ENCODE measurements at regions of chr22 and their contacts with region 1.

Region 1: DNA sequence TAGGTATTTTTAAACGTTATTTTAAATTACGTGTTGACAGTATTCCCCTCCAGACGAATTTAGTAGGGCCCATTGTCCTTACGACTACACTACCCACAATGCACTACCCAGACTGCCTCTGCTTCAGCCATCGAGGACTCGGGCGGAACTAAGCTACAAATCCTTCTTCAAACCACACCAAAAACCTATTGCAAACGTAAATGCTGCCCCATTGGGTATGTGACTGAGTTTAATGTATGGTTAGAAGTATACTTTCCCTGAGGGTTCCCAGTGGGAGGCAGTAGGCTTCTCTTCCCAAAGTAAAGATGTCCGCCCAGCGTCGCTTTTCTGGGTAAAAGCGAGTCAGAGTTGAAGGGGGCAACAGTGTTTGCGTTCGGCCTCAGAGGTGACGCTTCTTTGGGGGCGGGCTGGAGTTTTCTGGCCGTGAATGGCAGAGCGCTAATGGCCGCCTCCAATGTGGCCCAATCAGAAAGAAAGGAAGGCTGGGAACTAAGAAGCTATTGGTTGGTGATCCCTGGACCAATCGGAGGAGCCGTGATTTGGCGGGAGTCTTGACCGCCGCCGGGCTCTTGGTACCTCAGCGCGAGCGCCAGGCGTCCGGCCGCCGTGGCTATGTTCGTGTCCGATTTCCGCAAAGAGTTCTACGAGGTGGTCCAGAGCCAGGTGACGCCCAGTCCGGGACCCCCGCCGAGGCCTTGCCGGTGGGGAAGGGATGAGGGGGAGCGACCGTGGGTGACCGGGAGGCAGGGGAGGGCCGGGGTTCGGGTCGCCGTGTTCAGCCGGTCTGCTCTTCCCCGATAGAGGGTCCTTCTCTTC is at the start of gene CDC45:
- DNase-seq: peak; percentile 95 to 97 (median 95)
- H3K4me3 ChIP-seq: peak within 1 kb of the TSS; percentile 62 to 83
- H3K4me3 Mint-ChIP-seq: peak within 1 kb of the TSS; percentile 91 to 98 (median 94)
- H3K27ac ChIP-seq: peak within 1 kb of the TSS; percentile 96
- H3K27ac Mint-ChIP-seq: peak within 1 kb of the TSS; percentile 97 to 100 (median 100)
- H3K4me1 ChIP-seq: peaks cover 18% of the 10 kb centered on the region
- H3K4me1 Mint-ChIP-seq: peaks cover 21 to 46% (median 34%) of the 10 kb centered on the region in 4 donors
- H3K27me3 ChIP-seq: no peaks in the 10 kb centered on the region
- H3K27me3 Mint-ChIP-seq: no peaks in the 10 kb centered on the region
- total RNA-seq, gene CDC45: 0.53 to 0.64 TPM

Region 2: GRCh38 chr22:19109198-19110067 is 370.1 kb before region 1 on chr22:
- CTCF ChIA-PET with region 1: interaction called, 4 read pairs
- POLR2A ChIA-PET with region 1: interaction called, 4 read pairs
- intact Hi-C with region 1: loop called (anchors 1 kb)
- DNase-seq: peak; percentile 75 to 86 (median 82)
- H3K4me3 ChIP-seq: peak overlapping the region; percentile 26 to 29
- H3K4me3 Mint-ChIP-seq: peak overlapping the region; percentile 77 to 89 (median 84)
- H3K27ac ChIP-seq: peak overlapping the region; percentile 80
- H3K27ac Mint-ChIP-seq: peak overlapping the region; percentile 79 to 99 (median 97)
- H3K4me1 ChIP-seq: peaks cover 66% of the 10 kb centered on the region
- H3K4me1 Mint-ChIP-seq: peaks cover 51 to 76% (median 62%) of the 10 kb centered on the region in 4 donors
- H3K27me3 ChIP-seq: no peaks in the 10 kb centered on the region
- H3K27me3 Mint-ChIP-seq: no peaks in the 10 kb centered on the region

Region 3: GRCh38 chr22:19143967-19144400 is 335.6 kb before region 1 on chr22:
- CTCF ChIA-PET with region 1: interaction called, 10 read pairs
- POLR2A ChIA-PET with region 1: interaction called, 9 read pairs
- intact Hi-C with region 1: loop called (anchors 1 kb)
- DNase-seq: peak; percentile 22 to 59 (median 44)
- H3K4me3 ChIP-seq: peak overlapping the region; percentile 86 to 94
- H3K4me3 Mint-ChIP-seq: peak overlapping the region; percentile 96 to 100 (median 98)
- H3K27ac ChIP-seq: peak overlapping the region; percentile 81
- H3K27ac Mint-ChIP-seq: peak overlapping the region; percentile 90 to 99 (median 98)
- H3K4me1 ChIP-seq: peaks cover 12% of the 10 kb centered on the region
- H3K4me1 Mint-ChIP-seq: peaks cover 11 to 25% (median 18%) of the 10 kb centered on the region in 4 donors
- H3K27me3 ChIP-seq: peaks cover 7% of the 10 kb centered on the region
- H3K27me3 Mint-ChIP-seq: peaks cover 2 to 6% of the 10 kb centered on the region in 2 donors

Region 4: GRCh38 chr22:19419464-19420178 is 59.9 kb before region 1 on chr22:
- CTCF ChIA-PET with region 1: no interaction called
- POLR2A ChIA-PET with region 1: interaction called, 17 read pairs
- intact Hi-C with region 1: no loop called
- DNase-seq: peak; percentile 56 to 74 (median 63)
- H3K4me3 ChIP-seq: no peak overlapping the region
- H3K4me3 Mint-ChIP-seq: peak overlapping the region; percentile 34 to 74 (median 58)
- H3K27ac ChIP-seq: peak overlapping the region; percentile 60
- H3K27ac Mint-ChIP-seq: peak overlapping the region; percentile 76 to 94 (median 92)
- H3K4me1 ChIP-seq: peaks cover 59% of the 10 kb centered on the region
- H3K4me1 Mint-ChIP-seq: peaks cover 53 to 78% (median 64%) of the 10 kb centered on the region in 4 donors
- H3K27me3 ChIP-seq: no peaks in the 10 kb centered on the region
- H3K27me3 Mint-ChIP-seq: no peaks in the 10 kb centered on the region

Region 5: DNA sequence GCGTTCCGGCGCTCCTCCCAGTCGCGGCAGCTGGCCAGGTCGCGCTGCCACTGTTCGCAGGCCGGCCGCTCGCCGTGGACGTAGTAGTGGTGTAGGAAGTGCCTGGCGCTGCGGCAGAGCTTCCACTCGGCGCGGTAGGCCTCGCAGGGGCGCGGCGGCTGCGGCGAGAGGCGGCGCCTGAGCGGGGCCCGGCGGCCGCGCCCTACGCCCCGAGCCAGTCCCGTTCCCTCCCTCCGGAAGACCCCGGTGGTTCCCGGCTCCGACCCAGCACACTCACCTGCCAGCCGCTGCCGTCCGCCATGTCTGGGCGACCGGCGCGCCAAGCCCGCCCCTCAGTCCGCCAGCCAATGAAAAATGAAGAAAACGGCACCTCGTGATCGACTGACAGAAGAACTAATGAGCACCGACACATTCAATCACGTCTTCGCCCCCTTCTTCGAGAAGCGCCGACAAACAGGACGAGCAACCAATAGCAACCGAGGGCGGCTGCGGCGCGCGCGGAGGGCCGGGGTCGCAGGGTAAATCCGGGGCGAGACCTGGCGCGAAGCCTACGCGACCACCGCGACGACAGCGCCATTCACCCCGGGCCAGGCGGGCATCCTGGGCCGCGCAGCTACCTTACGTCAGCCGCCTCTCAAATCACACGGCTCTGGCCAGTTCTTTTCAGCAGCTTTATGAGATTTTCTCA is 32.0 kb before region 1 on chr22 and contains the start of gene C22orf39:
- CTCF ChIA-PET with region 1: no interaction called
- POLR2A ChIA-PET with region 1: interaction called, 33 read pairs
- intact Hi-C with region 1: loop called (anchors 1 kb)
- DNase-seq: peak; percentile 91 to 96 (median 91)
- H3K4me3 ChIP-seq: peak within 1 kb of the TSS; percentile 63 to 65
- H3K4me3 Mint-ChIP-seq: peak within 1 kb of the TSS; percentile 91 to 98 (median 95)
- H3K27ac ChIP-seq: peak within 1 kb of the TSS; percentile 91
- H3K27ac Mint-ChIP-seq: peak within 1 kb of the TSS; percentile 82 to 99 (median 99)
- H3K4me1 ChIP-seq: peaks cover 37% of the 10 kb centered on the region
- H3K4me1 Mint-ChIP-seq: peaks cover 29 to 59% (median 44%) of the 10 kb centered on the region in 4 donors
- H3K27me3 ChIP-seq: no peaks in the 10 kb centered on the region
- H3K27me3 Mint-ChIP-seq: no peaks in the 10 kb centered on the region
- total RNA-seq, gene C22orf39: 40.5 TPM

Region 6: DNA sequence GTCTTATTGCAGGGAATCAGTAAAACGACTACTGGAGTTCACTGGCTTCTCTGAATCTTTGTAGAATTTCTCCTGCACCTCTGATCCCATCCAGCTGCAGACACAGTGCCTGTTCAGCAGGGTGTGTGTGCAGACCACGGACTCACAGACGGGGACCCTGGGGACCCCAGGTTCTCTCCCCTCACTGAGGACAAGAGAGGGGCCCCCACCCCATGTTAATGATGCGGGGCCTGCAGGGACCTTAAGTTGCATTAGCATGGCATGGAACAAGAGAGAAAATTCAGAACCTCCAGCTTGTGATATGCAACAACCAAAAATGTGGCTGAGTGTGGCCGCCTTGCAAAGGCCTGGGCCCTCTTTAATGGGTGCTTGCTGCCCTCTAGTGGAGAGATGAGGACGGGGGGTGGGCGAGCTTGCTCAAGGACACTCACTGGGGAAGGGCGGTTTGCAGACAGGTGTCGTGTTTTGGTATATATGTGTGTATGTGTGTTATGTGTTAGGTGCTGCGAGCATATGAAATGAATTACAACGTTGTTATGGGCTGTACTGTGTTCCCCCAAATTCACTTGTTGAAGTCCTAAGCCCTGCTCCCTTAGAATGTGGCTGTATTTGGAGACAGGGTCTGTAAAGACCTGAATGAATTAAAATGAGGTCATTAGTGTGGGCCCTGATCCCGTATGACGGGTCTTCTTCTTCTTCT is 150.3 kb after region 1 on chr22:
- CTCF ChIA-PET with region 1: interaction called, 19 read pairs
- POLR2A ChIA-PET with region 1: interaction called, 4 read pairs
- intact Hi-C with region 1: loop called (anchors 1 kb)
- DNase-seq: peak; percentile 80 to 84 (median 81)
- H3K4me3 ChIP-seq: no peak overlapping the region
- H3K4me3 Mint-ChIP-seq: no peak overlapping the region
- H3K27ac ChIP-seq: no peak overlapping the region
- H3K27ac Mint-ChIP-seq: peak overlapping the region in 2 of 7 donors; percentile 29 to 67
- H3K4me1 ChIP-seq: no peaks in the 10 kb centered on the region
- H3K4me1 Mint-ChIP-seq: peaks cover 0 to 3% (median 1%) of the 10 kb centered on the region in 4 donors
- H3K27me3 ChIP-seq: no peaks in the 10 kb centered on the region
- H3K27me3 Mint-ChIP-seq: peaks cover 2% of the 10 kb centered on the region in 2 donors